ENCODE measurements at regions of chr6 and their contacts with region 1.

Region 1: GRCh38 chr6:80163658-80164187 is 57.3 kb downstream of the BCKDHB start:
- DNase-seq: no peak
- H3K4me3 Mint-ChIP-seq: no peak overlapping the region
- H3K27ac Mint-ChIP-seq: no peak overlapping the region
- H3K4me1 Mint-ChIP-seq: no peaks in the 10 kb centered on the region
- H3K27me3 Mint-ChIP-seq: no peaks in the 10 kb centered on the region

Region 2: GRCh38 chr6:79536954-79537747 is 626.6 kb before region 1 on chr6 and contains the start of gene LCA5:
- intact Hi-C with region 1: loop called (anchors 10 kb)
- DNase-seq: peak; percentile 81
- H3K4me3 Mint-ChIP-seq: no peak within 1 kb of the TSS
- H3K27ac Mint-ChIP-seq: no peak within 1 kb of the TSS
- H3K4me1 Mint-ChIP-seq: no peaks in the 10 kb centered on the region
- H3K27me3 Mint-ChIP-seq: peaks cover 17% of the 10 kb centered on the region
- total RNA-seq, gene LCA5: 0.08 and 0.17 TPM in 2 replicates

Region 3: GRCh38 chr6:80106418-80107235 is 57.1 kb before region 1 on chr6 and contains the start of gene BCKDHB:
- intact Hi-C with region 1: loop called (anchors 1 kb)
- DNase-seq: peak; percentile 98
- H3K4me3 Mint-ChIP-seq: peak within 1 kb of the TSS; percentile 96
- H3K27ac Mint-ChIP-seq: peak within 1 kb of the TSS; percentile 90
- H3K4me1 Mint-ChIP-seq: peaks cover 31% of the 10 kb centered on the region
- H3K27me3 Mint-ChIP-seq: peaks cover 2% of the 10 kb centered on the region
- total RNA-seq, gene BCKDHB: 13.3 and 14.4 TPM in 2 replicates

Region 4: DNA sequence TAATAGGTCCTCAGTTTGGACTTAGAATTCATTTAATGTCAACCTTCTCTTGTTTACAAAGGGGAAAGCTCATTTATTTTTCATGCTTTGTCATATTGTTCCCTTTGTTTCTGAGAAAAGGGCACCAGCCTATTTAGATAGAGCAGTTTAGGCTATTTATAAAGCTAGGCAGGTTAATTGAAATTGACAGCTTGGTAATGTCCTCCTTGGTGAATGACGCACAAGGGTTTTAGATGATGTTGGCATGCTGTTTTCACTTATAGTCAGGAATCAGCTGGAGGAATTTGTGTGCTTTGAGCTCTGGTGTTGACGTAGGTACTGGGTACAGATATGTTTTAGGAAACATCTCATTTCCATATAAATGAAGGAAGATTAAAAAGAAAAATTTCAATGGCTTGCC is 12.1 kb before region 1 on chr6:
- intact Hi-C with region 1: loop called (anchors 1 kb)
- DNase-seq: no peak
- H3K4me3 Mint-ChIP-seq: no peak overlapping the region
- H3K27ac Mint-ChIP-seq: no peak overlapping the region
- H3K4me1 Mint-ChIP-seq: no peaks in the 10 kb centered on the region
- H3K27me3 Mint-ChIP-seq: no peaks in the 10 kb centered on the region

Region 5: DNA sequence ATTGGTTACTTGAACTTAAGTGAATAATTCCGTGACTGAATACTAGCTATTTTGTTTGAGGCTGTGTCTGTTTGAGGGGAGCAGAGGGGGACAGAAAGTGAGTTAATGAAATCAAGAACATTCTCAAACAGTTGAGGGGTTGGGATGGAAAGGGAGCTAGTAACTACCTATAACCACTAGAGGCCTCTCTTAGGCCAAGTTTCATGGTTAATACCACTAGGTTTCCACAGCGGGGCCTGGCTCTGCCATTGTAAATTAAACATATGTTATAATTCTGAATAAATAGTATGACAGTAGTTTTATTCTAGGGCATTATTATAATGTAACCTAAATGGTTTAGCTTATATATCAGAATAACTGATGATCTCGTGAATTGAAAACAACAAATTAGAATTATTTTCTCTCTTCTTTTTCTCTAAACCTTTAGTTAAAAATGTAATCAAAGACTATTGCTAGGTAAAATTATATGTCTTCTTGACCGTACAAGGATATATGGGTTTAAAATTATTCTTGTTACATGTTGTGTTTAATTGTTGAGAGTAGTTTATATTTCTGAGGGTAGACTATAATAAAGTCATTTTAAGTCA is 50.8 kb after region 1 on chr6:
- intact Hi-C with region 1: no loop called
- DNase-seq: no peak
- H3K4me3 Mint-ChIP-seq: no peak overlapping the region
- H3K27ac Mint-ChIP-seq: no peak overlapping the region
- H3K4me1 Mint-ChIP-seq: peaks cover 7% of the 10 kb centered on the region
- H3K27me3 Mint-ChIP-seq: no peaks in the 10 kb centered on the region

Region 6: DNA sequence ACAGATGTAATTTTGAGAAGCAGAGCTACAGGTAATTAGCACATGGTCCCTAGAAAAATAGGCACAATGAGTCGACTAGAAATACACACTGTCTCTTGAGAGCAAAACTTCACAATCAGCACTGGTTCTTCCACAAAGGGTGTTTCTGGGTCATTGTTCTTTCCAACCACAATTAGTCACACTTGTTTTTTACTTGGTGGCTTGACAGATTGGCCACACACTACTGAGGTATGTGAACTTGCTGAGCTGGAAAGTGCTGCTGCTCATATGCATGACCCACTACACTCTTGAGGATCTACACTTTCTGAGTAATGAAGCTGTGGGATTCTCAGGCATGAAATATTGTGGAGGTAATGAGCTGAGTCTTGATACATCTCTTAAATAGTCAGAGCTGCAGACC is 290.5 kb after region 1 on chr6:
- intact Hi-C with region 1: no loop called
- DNase-seq: no peak
- H3K4me3 Mint-ChIP-seq: no peak overlapping the region
- H3K27ac Mint-ChIP-seq: peak overlapping the region; percentile 59
- H3K4me1 Mint-ChIP-seq: no peaks in the 10 kb centered on the region
- H3K27me3 Mint-ChIP-seq: no peaks in the 10 kb centered on the region

Region 7: DNA sequence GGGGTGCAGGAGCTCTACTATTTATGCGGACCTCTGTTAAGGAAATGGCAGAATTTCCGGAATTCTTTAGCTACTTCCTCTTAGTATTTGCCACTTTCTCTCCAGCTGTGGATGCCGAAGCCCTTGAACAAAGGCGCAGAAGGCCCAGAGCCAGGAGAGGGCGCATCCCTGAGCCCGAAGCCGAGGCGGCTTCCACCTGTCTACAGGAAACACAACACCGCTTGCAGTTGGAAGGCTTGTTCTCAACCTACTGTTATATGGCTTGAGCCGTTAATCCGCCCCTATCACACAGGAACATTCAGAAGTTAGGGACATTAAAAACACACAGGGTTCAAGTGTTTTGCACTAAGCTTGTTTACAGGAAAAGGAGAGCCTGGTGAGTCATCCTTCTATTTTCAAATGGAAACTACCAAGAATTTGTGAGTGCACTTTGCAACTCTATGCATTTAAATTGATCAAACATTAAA is 359.8 kb after region 1 on chr6:
- intact Hi-C with region 1: loop called (anchors 5 kb)
- DNase-seq: no peak
- H3K4me3 Mint-ChIP-seq: peak overlapping the region; percentile 12
- H3K27ac Mint-ChIP-seq: peak overlapping the region; percentile 91
- H3K4me1 Mint-ChIP-seq: peaks cover 14% of the 10 kb centered on the region
- H3K27me3 Mint-ChIP-seq: peaks cover 2% of the 10 kb centered on the region

Region 8: GRCh38 chr6:80541181-80541580 is 377.5 kb after region 1 on chr6:
- intact Hi-C with region 1: loop called (anchors 2 kb)
- DNase-seq: peak; percentile 8
- H3K4me3 Mint-ChIP-seq: no peak overlapping the region
- H3K27ac Mint-ChIP-seq: peak overlapping the region; percentile 35
- H3K4me1 Mint-ChIP-seq: peaks cover 44% of the 10 kb centered on the region
- H3K27me3 Mint-ChIP-seq: no peaks in the 10 kb centered on the region